ENCODE measurements at regions of chr2 and their contacts with region 1.

Region 1: GRCh38 chr2:234422273-234422767 is 74.6 kb downstream of the ARL4C start:
- DNase-seq: peak; percentile 96
- ATAC-seq: peak; percentile 97
- H3K4me3 ChIP-seq: no peak overlapping the region
- H3K27ac ChIP-seq: peak overlapping the region; percentile 81
- H3K4me1 ChIP-seq: peaks cover 38% of the 10 kb centered on the region
- H3K27me3 ChIP-seq: no peaks in the 10 kb centered on the region
- CTCF ChIP-seq: no peak

Region 2: GRCh38 chr2:234251326-234252271 is 170.7 kb before region 1 on chr2:
- CTCF ChIA-PET with region 1: no interaction called
- POLR2A ChIA-PET with region 1: no interaction called
- intact Hi-C with region 1: loop called (anchors 1 kb)
- DNase-seq: peak; percentile 97
- ATAC-seq: peak; percentile 74
- H3K4me3 ChIP-seq: peak overlapping the region; percentile 7; the same call in 1 of the 2 replicates
- H3K27ac ChIP-seq: peak overlapping the region; percentile 91
- H3K4me1 ChIP-seq: peaks cover 60% of the 10 kb centered on the region
- H3K27me3 ChIP-seq: no peaks in the 10 kb centered on the region
- CTCF ChIP-seq: no peak

Region 3: DNA sequence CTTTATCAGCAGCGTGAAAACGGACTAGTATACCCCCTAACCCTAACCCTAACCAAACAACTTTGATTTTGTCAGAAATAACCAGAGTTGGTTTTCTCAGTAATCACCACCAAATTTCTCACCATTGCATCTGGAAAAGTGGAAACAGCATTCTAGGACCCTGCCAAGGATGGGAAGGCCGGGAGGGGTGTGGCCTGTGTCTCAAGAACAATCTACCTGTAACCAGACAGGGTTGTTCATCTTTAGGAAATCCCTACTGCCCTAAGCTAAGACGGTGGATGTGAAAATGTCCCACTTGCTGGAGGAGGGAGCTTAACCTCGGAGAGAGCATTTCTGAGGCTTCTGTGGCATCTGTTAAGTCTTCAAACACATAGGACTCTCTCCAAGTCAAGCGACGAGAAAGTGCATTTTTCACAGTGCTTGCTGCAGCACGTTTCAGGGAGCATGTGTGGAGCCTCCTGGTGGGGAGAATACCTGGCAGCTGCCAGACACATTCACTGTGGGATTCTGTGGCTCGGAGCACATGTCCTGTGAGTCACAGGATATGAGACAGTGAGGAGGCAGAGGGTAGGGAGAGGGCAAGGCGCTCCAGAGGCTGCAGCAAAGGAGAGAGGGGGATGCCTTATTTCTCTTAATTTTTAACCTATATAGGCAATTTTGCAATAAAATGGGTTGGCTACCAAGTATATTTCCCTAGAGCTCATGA is 164.3 kb before region 1 on chr2:
- CTCF ChIA-PET with region 1: no interaction called
- POLR2A ChIA-PET with region 1: no interaction called
- intact Hi-C with region 1: loop called (anchors 1 kb)
- DNase-seq: peak; percentile 97
- ATAC-seq: peak; percentile 99
- H3K4me3 ChIP-seq: peak overlapping the region; percentile 22; the same call in 1 of the 2 replicates
- H3K27ac ChIP-seq: peak overlapping the region; percentile 97
- H3K4me1 ChIP-seq: peaks cover 41% of the 10 kb centered on the region
- H3K27me3 ChIP-seq: no peaks in the 10 kb centered on the region
- CTCF ChIP-seq: peak; percentile 80

Region 4: DNA sequence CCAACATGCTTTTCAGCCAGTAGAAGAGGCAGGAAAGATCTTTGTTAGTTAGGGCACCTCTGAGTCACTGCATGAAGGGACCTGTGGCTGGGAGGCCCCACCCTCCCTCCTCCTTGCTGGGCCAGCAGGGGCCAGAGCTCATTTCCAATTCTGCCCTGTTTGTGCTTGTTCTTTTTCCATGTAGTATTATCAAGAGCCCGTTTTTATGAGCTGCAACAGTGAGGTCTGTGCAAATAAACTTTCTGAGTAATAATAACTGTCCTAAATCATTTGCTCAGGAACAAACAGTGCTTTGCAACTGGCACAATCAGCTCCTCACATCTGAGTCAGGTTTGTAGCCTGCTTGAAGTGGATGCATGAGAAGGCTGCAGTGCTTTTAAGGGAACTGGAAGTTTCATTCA is 53.5 kb before region 1 on chr2:
- CTCF ChIA-PET with region 1: no interaction called
- POLR2A ChIA-PET with region 1: no interaction called
- intact Hi-C with region 1: loop called (anchors 2 kb)
- DNase-seq: peak; percentile 85
- ATAC-seq: peak; percentile 98
- H3K4me3 ChIP-seq: no peak overlapping the region
- H3K27ac ChIP-seq: peak overlapping the region; percentile 82
- H3K4me1 ChIP-seq: peaks cover 52% of the 10 kb centered on the region
- H3K27me3 ChIP-seq: no peaks in the 10 kb centered on the region
- CTCF ChIP-seq: no peak

Region 5: DNA sequence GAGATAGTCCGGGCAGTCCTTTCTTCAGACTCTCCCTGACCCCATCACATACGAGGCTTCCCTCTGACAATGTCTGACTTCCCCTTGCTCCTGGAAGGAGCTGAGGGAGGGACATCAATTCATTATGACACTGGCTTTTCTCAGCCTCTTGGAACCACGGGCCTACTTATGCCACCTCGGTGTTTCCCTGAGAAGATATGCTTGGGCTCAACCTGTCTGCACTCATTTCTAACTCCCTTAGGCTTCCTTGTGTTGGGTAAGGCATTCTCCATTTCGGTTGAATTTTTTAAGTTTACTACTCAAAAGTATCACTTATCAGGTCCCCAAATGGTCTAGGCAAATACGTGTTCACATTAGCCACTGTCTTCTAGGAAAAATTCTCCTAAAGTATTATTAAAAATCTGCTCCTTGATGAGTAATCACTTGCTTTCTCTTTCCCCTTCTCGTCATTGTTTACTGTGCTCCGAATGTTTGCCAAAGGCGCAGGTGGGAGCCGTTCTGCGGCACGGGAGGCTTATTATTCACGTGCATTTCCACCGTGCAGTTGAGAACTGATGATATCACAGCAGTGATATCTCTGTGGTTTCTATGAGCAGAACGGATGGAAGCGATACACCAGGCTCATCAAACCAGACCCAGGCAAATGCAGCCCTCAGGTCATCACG is 41.4 kb after region 1 on chr2:
- CTCF ChIA-PET with region 1: no interaction called
- POLR2A ChIA-PET with region 1: no interaction called
- intact Hi-C with region 1: loop called (anchors 1 kb)
- DNase-seq: peak; percentile 92
- ATAC-seq: peak; percentile 90
- H3K4me3 ChIP-seq: peak overlapping the region; percentile 31
- H3K27ac ChIP-seq: peak overlapping the region; percentile 58
- H3K4me1 ChIP-seq: peaks cover 22% of the 10 kb centered on the region
- H3K27me3 ChIP-seq: no peaks in the 10 kb centered on the region
- CTCF ChIP-seq: no peak

Region 6: DNA sequence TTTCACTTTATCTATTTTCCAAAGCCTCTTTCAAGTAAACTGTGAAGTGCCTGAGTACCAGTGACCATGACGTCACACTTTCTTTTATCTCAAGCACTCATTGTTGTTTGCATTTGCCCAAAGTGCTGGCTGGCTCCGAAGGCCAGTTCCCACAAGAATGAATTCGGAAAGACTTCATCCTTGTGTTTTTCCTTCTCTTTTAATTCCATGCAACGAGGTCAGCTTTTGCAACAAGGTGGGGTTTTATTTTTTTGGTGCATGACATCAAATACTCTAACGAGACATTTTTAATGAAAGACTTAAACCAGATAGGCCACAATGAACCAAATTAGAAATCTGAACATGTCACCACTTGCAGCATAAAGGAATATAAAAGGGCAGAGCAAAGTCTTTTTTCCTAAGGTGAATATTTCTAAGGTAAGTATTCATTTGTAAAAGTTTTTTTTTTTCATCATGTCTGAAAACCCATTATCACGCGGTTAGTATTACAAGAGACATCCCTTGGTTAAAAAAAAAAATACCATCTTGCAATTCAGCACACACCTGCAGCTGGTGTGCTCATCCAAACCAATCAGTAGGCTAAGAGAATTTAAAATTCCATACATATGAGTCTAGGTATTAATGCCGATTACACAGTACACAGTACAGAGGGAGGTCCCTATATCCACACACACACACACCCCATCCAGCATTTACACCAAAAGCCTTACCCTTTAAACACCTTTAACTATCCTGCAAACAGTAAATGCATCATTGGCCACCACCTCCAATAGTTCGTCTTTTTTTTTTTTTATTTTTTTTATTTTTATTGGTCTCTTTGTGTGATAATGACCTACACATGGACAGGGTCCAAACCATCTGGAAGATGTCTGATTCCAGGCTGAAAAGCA is 72.3 kb after region 1 on chr2:
- CTCF ChIA-PET with region 1: interaction called, 5 read pairs
- POLR2A ChIA-PET with region 1: interaction called, 3 read pairs
- intact Hi-C with region 1: loop called (anchors 5 kb)
- DNase-seq: peak; percentile 49
- ATAC-seq: peak; percentile 27
- H3K4me3 ChIP-seq: peak overlapping the region; percentile 98
- H3K27ac ChIP-seq: no peak overlapping the region
- H3K4me1 ChIP-seq: peaks cover 14% of the 10 kb centered on the region
- H3K27me3 ChIP-seq: no peaks in the 10 kb centered on the region
- CTCF ChIP-seq: no peak

Measured in PC-3 (cell line).